Activated B cell treated with CpG ODN at 0.5 μM for 24 hours (primary cell): ENCODE measurements at regions of chr11 and their contacts with region 1.

Region 1: DNA sequence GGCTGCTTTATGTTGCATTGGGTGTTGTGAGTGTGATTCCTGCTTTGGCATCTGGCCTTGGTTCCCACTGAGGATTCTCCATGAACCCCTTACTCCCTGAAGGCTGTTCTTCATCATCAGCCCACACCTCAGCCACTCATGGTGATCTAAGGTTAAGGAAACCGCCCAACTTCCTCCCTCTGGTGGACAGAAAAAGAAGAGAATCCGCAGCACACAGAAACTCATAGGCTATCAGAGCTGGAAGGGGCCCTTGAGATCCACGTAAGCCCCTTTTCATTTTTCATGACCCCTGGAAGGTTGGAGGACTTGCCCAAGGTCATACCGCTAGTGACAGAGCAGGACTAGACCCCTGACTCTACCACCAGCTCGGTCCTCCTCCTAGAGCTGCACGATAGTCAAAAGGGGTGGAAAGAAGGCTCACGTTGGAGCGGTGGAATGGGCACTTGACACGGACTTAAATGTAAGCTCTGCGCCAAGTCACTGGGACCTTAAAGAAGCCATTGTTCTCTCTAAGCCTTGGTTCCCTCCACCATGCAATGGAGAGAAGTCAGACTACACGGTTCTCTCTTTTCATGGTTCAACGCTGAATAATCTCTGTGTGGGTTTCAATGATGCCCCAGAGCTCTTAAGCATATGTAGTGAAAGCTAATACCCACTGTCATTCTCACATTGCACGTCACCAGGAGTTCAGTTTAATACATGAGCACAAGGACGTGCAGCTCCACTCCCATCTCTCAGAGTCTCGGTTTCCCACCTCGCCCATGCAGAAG is 83.6 kb upstream of the CRTAM start:
- DNase-seq: no peak
- ATAC-seq: peak; percentile 48
- H3K4me3 Mint-ChIP-seq: no peak overlapping the region
- H3K27ac Mint-ChIP-seq: no peak overlapping the region
- H3K4me1 Mint-ChIP-seq: peaks cover 28% of the 10 kb centered on the region
- H3K27me3 Mint-ChIP-seq: no peaks in the 10 kb centered on the region
- CTCF ChIP-seq: no peak

Region 2: GRCh38 chr11:122628810-122629555 is 125.8 kb before region 1 on chr11:
- CTCF ChIA-PET with region 1: interaction called, 134 read pairs
- POLR2A ChIA-PET with region 1: interaction called, 6 read pairs
- intact Hi-C with region 1: loop called (anchors 1 kb)
- DNase-seq: peak; percentile 47
- ATAC-seq: peak; percentile 88
- H3K4me3 Mint-ChIP-seq: no peak overlapping the region
- H3K27ac Mint-ChIP-seq: no peak overlapping the region
- H3K4me1 Mint-ChIP-seq: peaks cover 2% of the 10 kb centered on the region
- H3K27me3 Mint-ChIP-seq: peaks cover 15% of the 10 kb centered on the region
- CTCF ChIP-seq: no peak

Region 3: GRCh38 chr11:122661182-122661945 is 93.4 kb before region 1 on chr11:
- CTCF ChIA-PET with region 1: interaction called, 79 read pairs
- POLR2A ChIA-PET with region 1: interaction called, 11 read pairs
- intact Hi-C with region 1: no loop called
- DNase-seq: no peak
- ATAC-seq: no peak
- H3K4me3 Mint-ChIP-seq: no peak overlapping the region
- H3K27ac Mint-ChIP-seq: no peak overlapping the region
- H3K4me1 Mint-ChIP-seq: peaks cover 17% of the 10 kb centered on the region
- H3K27me3 Mint-ChIP-seq: no peaks in the 10 kb centered on the region
- CTCF ChIP-seq: no peak

Region 4: DNA sequence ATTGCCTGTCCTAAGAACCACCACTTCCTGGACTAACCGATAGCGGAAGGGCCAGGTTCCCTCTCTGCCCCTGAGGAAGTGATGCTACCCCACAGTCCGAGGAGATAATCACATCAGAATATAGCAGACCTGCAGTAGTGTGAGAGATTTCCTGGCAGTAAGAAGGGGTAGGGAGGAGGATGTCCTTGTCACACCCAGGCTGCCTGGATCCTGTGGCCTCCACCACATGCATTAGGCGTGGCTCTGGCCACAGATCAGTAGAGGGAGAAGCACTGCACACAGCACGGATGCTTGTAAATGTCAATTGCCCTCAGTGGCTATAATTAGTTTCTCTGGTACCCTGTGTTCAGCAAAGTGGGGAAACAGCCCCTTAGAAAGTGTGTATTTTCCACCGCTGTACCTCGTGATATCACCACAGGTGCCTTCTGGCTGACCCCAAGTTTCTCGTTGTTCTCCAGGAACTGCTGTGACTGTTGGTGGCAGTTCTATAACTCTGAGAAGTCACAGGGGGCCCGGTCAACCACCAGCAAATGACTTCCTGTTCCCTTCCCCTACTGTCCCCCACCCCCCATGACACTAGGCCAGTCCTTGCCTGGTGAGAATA is 37.4 kb before region 1 on chr11:
- CTCF ChIA-PET with region 1: interaction called, 7 read pairs
- POLR2A ChIA-PET with region 1: interaction called, 3 read pairs
- intact Hi-C with region 1: loop called (anchors 1 kb)
- DNase-seq: peak; percentile 38
- ATAC-seq: peak; percentile 69
- H3K4me3 Mint-ChIP-seq: peak overlapping the region; percentile 47
- H3K27ac Mint-ChIP-seq: peak overlapping the region; percentile 80
- H3K4me1 Mint-ChIP-seq: peaks cover 83% of the 10 kb centered on the region
- H3K27me3 Mint-ChIP-seq: peaks cover 2% of the 10 kb centered on the region
- CTCF ChIP-seq: no peak

Region 5: GRCh38 chr11:122733318-122733717 is 21.4 kb before region 1 on chr11:
- CTCF ChIA-PET with region 1: interaction called, 12 read pairs
- POLR2A ChIA-PET with region 1: no interaction called
- intact Hi-C with region 1: no loop called
- DNase-seq: no peak
- ATAC-seq: no peak
- H3K4me3 Mint-ChIP-seq: no peak overlapping the region
- H3K27ac Mint-ChIP-seq: no peak overlapping the region
- H3K4me1 Mint-ChIP-seq: peaks cover 23% of the 10 kb centered on the region
- H3K27me3 Mint-ChIP-seq: no peaks in the 10 kb centered on the region
- CTCF ChIP-seq: no peak

Region 6: GRCh38 chr11:122765487-122766131 is 10.9 kb after region 1 on chr11:
- CTCF ChIA-PET with region 1: interaction called, 22 read pairs
- POLR2A ChIA-PET with region 1: no interaction called
- intact Hi-C with region 1: no loop called
- DNase-seq: no peak
- ATAC-seq: no peak
- H3K4me3 Mint-ChIP-seq: no peak overlapping the region
- H3K27ac Mint-ChIP-seq: no peak overlapping the region
- H3K4me1 Mint-ChIP-seq: no peaks in the 10 kb centered on the region
- H3K27me3 Mint-ChIP-seq: no peaks in the 10 kb centered on the region
- CTCF ChIP-seq: no peak

Region 7: GRCh38 chr11:122853971-122854446 is 99.3 kb after region 1 on chr11:
- CTCF ChIA-PET with region 1: interaction called, 8 read pairs
- POLR2A ChIA-PET with region 1: no interaction called
- intact Hi-C with region 1: loop called (anchors 1 kb)
- DNase-seq: no peak
- ATAC-seq: no peak
- H3K4me3 Mint-ChIP-seq: no peak overlapping the region
- H3K27ac Mint-ChIP-seq: no peak overlapping the region
- H3K4me1 Mint-ChIP-seq: peaks cover 35% of the 10 kb centered on the region
- H3K27me3 Mint-ChIP-seq: no peaks in the 10 kb centered on the region
- CTCF ChIP-seq: peak; percentile 51